ENCODE measurements at regions of chr15 and their contacts with region 1.

Region 1: DNA sequence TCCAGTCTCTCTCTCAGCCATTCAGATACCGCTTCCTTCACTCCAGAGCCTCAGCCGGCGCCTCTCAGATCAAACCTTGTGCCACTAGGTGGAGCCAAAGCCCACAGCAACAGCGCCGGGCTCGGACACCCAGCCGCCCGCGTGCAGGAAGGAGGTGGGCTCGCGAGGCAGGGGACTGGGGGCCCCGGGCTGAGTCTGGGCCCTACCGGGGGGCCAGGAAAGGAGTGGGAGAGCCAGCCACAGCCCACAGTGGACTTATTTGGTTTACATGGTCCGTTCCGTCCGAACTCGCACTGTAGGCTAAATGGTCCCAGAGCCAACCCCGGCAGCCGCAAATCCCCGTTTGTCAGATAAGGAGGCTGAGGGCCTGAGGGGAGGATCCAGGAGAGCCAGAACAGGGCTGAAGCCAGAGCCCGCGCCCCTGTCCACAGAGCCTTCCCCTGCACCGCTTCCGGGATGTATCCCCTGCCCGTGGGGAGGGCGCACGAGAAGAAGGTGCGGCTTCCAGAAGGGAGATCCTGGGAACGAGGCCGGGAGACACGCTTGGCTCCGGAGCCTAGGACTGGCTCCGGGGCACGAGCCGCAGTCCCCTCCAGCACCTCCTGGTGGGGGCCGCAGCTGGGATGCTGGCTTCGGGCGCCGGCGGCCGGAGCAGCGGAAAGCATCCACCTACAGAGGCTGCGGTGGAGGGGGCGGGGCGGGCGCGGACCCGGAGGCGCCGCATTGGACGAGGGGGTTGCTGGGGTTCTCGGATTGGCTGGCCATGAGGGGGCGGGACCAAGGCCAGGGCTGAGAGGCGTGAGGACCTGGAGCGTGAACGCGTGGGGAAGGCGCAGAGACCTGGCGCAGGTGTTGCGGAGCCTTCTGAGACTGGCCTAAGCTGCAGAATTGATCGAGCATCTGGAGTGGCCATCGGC is 6.5 kb upstream of the CYP11A1 start:
- DNase-seq: peak; percentile 96
- ATAC-seq: peak; percentile 98

Region 2: DNA sequence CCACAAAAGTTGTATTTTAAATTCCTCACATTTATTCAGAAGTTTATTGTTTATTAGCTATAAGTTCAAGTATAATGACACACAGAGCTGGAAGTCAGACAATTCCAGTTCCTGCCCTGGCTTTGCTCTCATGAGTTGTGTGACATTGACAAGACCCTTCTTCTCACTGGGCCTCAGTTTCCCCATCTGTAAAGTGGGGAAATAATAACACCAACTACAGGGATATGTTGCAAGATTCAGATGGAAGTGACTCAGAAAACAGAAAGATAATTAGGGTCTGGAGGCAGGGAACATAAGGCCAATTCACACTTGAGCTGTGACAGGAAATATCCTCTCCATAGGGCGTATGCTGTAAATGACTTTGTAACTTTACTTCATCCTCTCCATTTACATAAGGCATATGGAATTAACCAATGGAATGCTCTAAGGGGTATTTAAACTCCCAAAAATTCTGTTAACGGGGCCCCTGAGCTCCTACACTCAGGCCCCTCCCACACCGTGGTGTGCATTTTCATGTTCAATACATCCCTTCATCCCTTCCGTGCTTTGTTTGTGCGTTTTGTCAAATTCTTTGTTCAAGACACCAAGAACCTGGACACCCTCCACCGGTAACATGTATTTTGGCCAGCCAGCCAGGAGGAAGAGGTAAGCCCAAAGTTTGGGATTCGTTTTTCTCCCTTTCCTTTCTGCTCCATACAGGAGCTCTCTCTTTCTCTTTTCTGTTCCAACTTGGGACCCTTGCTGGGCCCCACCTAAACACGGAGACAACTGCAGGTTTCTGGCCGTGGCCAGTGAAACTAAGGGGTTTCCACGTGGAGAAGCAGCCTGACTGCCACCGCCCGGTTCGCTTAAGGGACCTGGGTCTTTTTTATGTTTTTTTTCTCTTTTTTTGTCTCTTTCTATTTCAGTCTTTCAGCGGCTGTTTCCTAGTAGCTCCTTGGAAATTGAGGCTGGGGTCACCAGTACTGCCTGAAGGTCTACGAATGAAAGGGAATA is 23.4 kb before region 1 on chr15:
- intact Hi-C with region 1: no loop called
- DNase-seq: no peak
- ATAC-seq: no peak

Region 3: DNA sequence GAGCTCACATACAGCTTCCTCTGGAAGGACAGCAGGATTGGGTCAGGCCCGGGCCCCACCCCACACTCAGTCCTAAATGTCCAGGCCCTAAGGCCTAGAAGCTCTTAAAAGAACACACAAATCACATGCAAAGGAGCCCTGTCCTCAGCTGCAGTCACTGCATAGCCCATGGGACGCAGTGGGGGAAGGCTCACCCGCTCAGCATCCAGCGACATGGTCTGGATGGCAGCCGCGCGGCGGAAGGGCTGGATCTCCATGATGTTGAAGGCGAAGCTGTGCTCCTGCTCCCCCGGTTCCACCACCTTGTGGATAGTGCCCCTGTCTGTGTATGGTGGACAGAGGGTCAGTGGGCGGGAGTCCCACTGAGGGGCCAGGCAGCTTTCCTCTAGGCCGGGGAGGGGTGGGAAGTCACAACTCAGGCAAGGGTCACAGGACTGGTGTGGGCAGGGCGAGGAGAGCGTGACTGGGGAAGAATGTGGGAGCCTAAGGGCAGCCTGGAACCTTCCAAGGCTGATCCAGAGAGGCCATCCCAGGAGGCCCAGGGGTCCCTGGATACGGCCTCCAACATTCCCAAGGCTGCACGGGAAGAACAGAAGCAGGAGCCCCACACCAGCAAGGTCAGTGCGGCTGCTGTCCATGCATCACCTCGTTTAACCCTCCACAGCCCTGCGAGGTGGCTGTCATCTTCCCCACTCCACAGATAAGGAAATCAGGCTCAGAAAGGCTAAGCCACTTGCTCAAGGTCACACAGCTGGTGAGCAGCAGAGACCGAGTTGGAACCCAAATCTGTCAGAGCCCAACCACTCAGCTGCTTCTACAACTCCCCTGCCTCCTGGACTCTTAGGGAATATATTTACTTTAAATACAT is 37.9 kb after region 1 on chr15:
- intact Hi-C with region 1: no loop called
- DNase-seq: no peak
- ATAC-seq: no peak

Region 4: GRCh38 chr15:74422650-74423430 is 48.9 kb after region 1 on chr15:
- intact Hi-C with region 1: no loop called
- DNase-seq: no peak
- ATAC-seq: peak; percentile 20

Region 5: GRCh38 chr15:74489518-74490338 is 115.7 kb after region 1 on chr15:
- intact Hi-C with region 1: loop called (anchors 2 kb)
- DNase-seq: no peak
- ATAC-seq: peak; percentile 65

Region 6: DNA sequence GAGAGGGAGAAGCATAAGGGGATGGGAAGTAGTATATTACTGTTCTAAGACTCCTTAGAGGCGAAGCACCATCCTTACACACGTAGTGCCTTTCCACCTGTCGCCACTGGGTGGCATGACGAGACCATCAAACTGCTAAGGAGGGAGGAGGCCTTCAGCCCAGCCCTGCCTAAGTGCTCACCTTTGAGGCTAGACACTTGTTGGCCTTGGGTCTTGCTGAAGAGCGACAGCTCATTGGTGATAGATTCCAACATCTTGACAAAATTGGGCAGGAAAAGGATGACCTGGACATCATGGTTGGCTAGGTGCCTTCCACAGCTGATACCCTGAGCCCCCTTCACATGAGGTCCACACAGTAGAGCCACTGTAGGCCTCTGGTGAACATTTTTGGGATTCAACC is 261.2 kb after region 1 on chr15:
- intact Hi-C with region 1: loop called (anchors 2 kb)
- DNase-seq: no peak
- ATAC-seq: peak; percentile 64

Measured in Right ventricle myocardium inferior (tissue), 1 donor.